ENCODE measurements at regions of chr2 and their contacts with region 1.

Region 1: DNA sequence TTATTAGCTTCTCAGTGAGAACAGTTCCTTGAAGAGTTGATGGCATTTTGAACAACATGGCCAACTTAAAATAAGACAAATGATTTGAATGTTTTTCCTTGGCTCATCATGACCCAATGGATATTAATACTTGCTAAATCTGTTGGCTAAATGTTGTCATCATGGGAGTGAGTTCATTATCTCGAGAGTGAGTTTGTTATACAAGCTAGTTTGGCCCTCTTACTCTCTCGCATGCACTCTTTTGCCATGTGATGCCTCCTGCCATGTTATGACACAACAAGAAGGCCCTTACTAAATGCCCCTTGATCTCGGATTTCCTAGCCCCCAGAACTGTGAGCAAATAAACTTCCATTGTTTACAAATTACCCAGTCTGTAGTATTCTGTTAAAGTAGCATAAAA is 22.9 kb upstream of the SANBR start:
- DNase-seq: no peak
- H3K4me3 ChIP-seq: no peak overlapping the region
- H3K27ac ChIP-seq: no peak overlapping the region
- H3K4me1 ChIP-seq: peaks cover 16% of the 10 kb centered on the region
- H3K27me3 ChIP-seq: no peaks in the 10 kb centered on the region
- CTCF ChIP-seq: no peak

Region 2: GRCh38 chr2:60780721-60781120 is 262.1 kb before region 1 on chr2:
- CTCF ChIA-PET with region 1: no interaction called
- POLR2A ChIA-PET with region 1: interaction called, 24 read pairs
- intact Hi-C with region 1: no loop called
- DNase-seq: no peak
- H3K4me3 ChIP-seq: no peak overlapping the region
- H3K27ac ChIP-seq: no peak overlapping the region
- H3K4me1 ChIP-seq: no peaks in the 10 kb centered on the region
- H3K27me3 ChIP-seq: no peaks in the 10 kb centered on the region
- CTCF ChIP-seq: no peak

Region 3: DNA sequence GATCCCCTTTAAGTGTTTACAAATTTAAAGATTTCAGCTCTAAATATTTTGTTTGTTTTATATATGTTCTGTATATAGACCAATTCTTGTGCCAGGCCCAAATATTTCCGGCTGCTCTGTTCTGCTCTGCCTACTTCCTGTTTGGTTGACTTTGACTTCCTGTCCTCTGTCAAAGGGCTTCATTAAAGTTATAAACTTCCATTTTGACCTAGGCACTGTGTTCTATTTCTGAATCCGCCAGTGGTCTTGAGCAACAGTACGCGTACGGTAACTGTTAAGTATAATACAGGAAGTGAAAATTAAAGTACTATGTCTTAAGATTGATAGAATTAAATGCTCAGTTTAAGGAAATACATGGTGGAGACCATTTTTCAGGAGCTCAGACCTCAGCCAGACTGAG is 175.0 kb before region 1 on chr2:
- CTCF ChIA-PET with region 1: no interaction called
- POLR2A ChIA-PET with region 1: no interaction called
- intact Hi-C with region 1: no loop called
- DNase-seq: peak; percentile 73
- H3K4me3 ChIP-seq: no peak overlapping the region
- H3K27ac ChIP-seq: no peak overlapping the region
- H3K4me1 ChIP-seq: peaks cover 5% of the 10 kb centered on the region
- H3K27me3 ChIP-seq: no peaks in the 10 kb centered on the region
- CTCF ChIP-seq: no peak

Measured in A673 (cell line).